CD8-positive, alpha-beta memory T cell (primary cell): ENCODE measurements at regions of chr14 and their contacts with region 1.

Region 1: GRCh38 chr14:64823305-64823861 is 56.3 kb downstream of the SPTB start:
- DNase-seq: peak; percentile 45 to 74 (median 51)
- H3K4me3 ChIP-seq: no peak overlapping the region
- H3K4me3 Mint-ChIP-seq: peak overlapping the region in 2 of 7 donors; percentile 11 to 53
- H3K27ac ChIP-seq: no peak overlapping the region
- H3K27ac Mint-ChIP-seq: peak overlapping the region in 1 of 8 donors; percentile 38
- H3K4me1 ChIP-seq: peaks cover 7% of the 10 kb centered on the region
- H3K4me1 Mint-ChIP-seq: peaks cover 5 to 9% (median 6%) of the 10 kb centered on the region in 3 donors
- H3K27me3 ChIP-seq: peaks cover 4% of the 10 kb centered on the region
- H3K27me3 Mint-ChIP-seq: peaks cover 6 to 59% of the 10 kb centered on the region in 2 donors

Region 2: GRCh38 chr14:64745511-64746091 is 77.8 kb before region 1 on chr14:
- CTCF ChIA-PET with region 1: no interaction called
- POLR2A ChIA-PET with region 1: no interaction called
- DNase-seq: no peak
- H3K4me3 ChIP-seq: no peak overlapping the region
- H3K4me3 Mint-ChIP-seq: peak overlapping the region in 4 of 7 donors; percentile 3 to 43 (median 30)
- H3K27ac ChIP-seq: no peak overlapping the region
- H3K27ac Mint-ChIP-seq: peak overlapping the region in 6 of 8 donors; percentile 24 to 93 (median 66)
- H3K4me1 ChIP-seq: peaks cover 13% of the 10 kb centered on the region
- H3K4me1 Mint-ChIP-seq: peaks cover 27 to 32% (median 27%) of the 10 kb centered on the region in 3 donors
- H3K27me3 ChIP-seq: no peaks in the 10 kb centered on the region
- H3K27me3 Mint-ChIP-seq: peaks cover 0 to 2% of the 10 kb centered on the region in 2 donors

Region 3: GRCh38 chr14:64764641-64765520 is 58.5 kb before region 1 on chr14:
- CTCF ChIA-PET with region 1: no interaction called
- POLR2A ChIA-PET with region 1: no interaction called
- DNase-seq: peak; percentile 51 to 75 (median 61)
- H3K4me3 ChIP-seq: no peak overlapping the region
- H3K4me3 Mint-ChIP-seq: peak overlapping the region; percentile 11 to 85 (median 59)
- H3K27ac ChIP-seq: no peak overlapping the region
- H3K27ac Mint-ChIP-seq: peak overlapping the region in 6 of 8 donors; percentile 29 to 86 (median 71)
- H3K4me1 ChIP-seq: peaks cover 29% of the 10 kb centered on the region
- H3K4me1 Mint-ChIP-seq: peaks cover 42 to 48% (median 47%) of the 10 kb centered on the region in 3 donors
- H3K27me3 ChIP-seq: no peaks in the 10 kb centered on the region
- H3K27me3 Mint-ChIP-seq: peaks cover under 1 to 5% of the 10 kb centered on the region in 2 donors

Region 4: DNA sequence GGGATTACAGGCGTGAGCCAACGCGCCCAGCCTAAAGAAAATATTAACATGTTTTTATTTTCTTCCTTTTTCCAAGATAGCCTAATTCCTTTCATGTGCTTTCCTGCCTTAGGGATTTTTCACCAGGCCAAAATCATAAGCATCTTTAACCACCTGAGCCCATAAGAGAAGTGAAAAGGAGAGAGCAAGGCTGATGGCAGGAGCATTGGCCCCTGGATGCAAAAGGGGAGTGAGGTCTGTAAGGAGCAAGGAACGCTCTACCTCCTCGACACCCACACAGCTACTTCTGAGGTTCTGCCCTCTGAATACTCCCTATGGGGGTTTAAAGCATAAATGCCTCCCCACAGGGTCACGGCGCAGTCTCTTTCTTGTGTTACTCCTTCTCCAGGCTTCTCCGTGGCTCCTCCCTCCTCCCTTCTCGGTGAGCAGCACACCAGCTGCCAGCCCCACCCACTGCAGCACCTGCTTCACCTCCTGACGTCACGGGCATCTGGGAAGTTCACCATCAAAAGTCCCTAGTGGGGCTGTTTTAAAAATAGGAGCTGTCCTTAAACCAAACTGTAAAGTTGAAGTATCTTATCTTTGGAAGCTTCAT is 11.1 kb before region 1 on chr14:
- CTCF ChIA-PET with region 1: interaction called, 11 read pairs
- POLR2A ChIA-PET with region 1: no interaction called
- DNase-seq: peak in 3 of 5 donors; percentile 7 to 15 (median 10)
- H3K4me3 ChIP-seq: no peak overlapping the region
- H3K4me3 Mint-ChIP-seq: peak overlapping the region in 1 of 7 donors; percentile 72
- H3K27ac ChIP-seq: no peak overlapping the region
- H3K27ac Mint-ChIP-seq: no peak overlapping the region
- H3K4me1 ChIP-seq: no peaks in the 10 kb centered on the region
- H3K4me1 Mint-ChIP-seq: peaks cover 0 to 5% (median 4%) of the 10 kb centered on the region in 3 donors
- H3K27me3 ChIP-seq: no peaks in the 10 kb centered on the region
- H3K27me3 Mint-ChIP-seq: peaks cover 10 to 49% of the 10 kb centered on the region in 2 donors